Gastrocnemius medialis (tissue), 4 donors: ENCODE measurements at regions of chr15 and their contacts with region 1.

Region 1: DNA sequence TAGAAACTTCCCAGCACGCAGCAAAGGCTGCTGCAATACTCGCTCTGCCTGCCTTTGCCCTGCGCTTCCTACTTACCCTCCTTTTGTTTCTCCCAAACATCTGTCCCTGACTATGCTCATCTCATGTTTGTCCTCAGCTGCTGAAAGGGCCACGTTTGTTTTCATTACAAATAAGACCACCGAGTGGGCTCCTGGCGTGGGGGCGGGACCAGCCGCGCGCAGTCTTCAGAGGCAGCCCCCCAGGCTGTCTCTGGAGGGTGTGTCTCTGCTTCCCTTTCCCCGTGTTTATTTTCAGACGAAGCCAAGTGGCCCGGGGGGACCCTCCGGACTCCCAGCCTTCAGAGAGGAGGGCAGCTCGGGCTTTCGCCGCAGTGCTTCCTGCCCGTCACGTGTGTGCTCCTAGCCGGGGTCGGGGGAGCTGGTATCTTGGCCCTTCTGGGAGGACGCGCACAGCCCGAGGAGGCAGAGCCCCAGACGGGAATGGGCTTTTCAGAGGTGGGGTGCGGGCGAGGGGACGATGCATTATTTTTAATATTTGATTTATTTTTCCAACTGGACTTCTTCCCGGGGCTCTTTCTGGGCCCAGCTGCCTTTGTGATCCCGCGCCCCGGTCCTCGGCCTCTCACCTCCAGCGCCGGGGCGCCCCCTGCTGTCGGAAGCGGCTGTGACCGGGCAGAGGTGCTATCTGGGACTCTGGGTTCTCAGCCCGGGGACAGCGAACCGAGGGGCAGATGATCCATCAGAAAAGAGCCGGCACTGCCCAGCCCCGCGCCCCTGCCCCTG is 70.0 kb upstream of the CGNL1 start:
- DNase-seq: peak; percentile 58 to 73
- ATAC-seq: peak; percentile 73 to 92
- H3K4me3 ChIP-seq: peak overlapping the region; percentile 65 to 75 (median 72)
- H3K27ac ChIP-seq: peak overlapping the region in 1 of 4 donors; percentile 37
- H3K4me1 ChIP-seq: peaks cover 5 to 14% of the 10 kb centered on the region in 2 donors
- H3K27me3 ChIP-seq: no peaks in the 10 kb centered on the region
- CTCF ChIP-seq: peak; percentile 83 to 93 (median 90)
- POLR2A ChIP-seq: no peak

Region 2: GRCh38 chr15:56491110-56491722 is 815.1 kb before region 1 on chr15:
- in situ Hi-C with region 1: loop called (anchors 10 to 25 kb)
- intact Hi-C with region 1: loop called (anchors 2 kb)
- DNase-seq: peak; percentile 23 to 24
- ATAC-seq: no peak
- H3K4me3 ChIP-seq: no peak overlapping the region
- H3K27ac ChIP-seq: no peak overlapping the region
- H3K4me1 ChIP-seq: no peaks in the 10 kb centered on the region
- H3K27me3 ChIP-seq: no peaks in the 10 kb centered on the region
- CTCF ChIP-seq: peak in 4 of 5 experiments; percentile 27 to 75 (median 58)
- POLR2A ChIP-seq: no peak

Region 3: DNA sequence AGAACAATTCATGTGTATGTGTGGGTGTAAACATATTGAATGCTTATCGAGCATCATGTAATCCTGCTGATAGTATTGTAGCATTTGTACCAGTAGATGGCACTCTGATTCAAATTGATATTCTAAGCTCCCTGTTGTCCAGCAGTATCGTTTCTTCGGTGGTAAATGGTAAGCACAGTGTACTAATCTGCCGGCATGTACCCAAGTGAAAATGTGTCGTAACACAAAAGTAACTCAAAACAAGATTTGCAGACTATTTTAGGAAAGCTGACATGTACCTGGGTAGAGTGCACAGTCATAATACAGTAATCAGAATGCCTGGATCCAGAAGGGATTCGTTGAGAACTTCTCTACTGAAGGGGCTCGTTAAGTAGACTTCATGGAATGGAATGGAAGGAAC is 809.7 kb before region 1 on chr15:
- in situ Hi-C with region 1: loop called (anchors 10 to 25 kb)
- intact Hi-C with region 1: loop called (anchors 2 kb)
- DNase-seq: no peak
- ATAC-seq: peak; percentile 65 to 78
- H3K4me3 ChIP-seq: peak overlapping the region in 1 of 4 donors; percentile 5
- H3K27ac ChIP-seq: no peak overlapping the region
- H3K4me1 ChIP-seq: no peaks in the 10 kb centered on the region
- H3K27me3 ChIP-seq: no peaks in the 10 kb centered on the region
- CTCF ChIP-seq: peak; percentile 26 to 72 (median 57)
- POLR2A ChIP-seq: no peak

Region 4: GRCh38 chr15:56821721-56822425 is 484.5 kb before region 1 on chr15:
- in situ Hi-C with region 1: no loop called
- intact Hi-C with region 1: loop called (anchors 5 kb)
- DNase-seq: peak in 1 of 2 donors; percentile 55
- ATAC-seq: peak; percentile 65 to 84
- H3K4me3 ChIP-seq: no peak overlapping the region
- H3K27ac ChIP-seq: no peak overlapping the region
- H3K4me1 ChIP-seq: peaks cover 12 to 23% of the 10 kb centered on the region in 2 donors
- H3K27me3 ChIP-seq: no peaks in the 10 kb centered on the region
- CTCF ChIP-seq: peak; percentile 54 to 75 (median 69)
- POLR2A ChIP-seq: no peak

Region 5: GRCh38 chr15:57146506-57147201 is 159.7 kb before region 1 on chr15:
- in situ Hi-C with region 1: loop called (anchors 5 to 10 kb)
- intact Hi-C with region 1: loop called (anchors 1 kb)
- DNase-seq: no peak
- ATAC-seq: peak in 1 of 2 donors; percentile 33
- H3K4me3 ChIP-seq: peak overlapping the region in 3 of 4 donors; percentile 22 to 42 (median 31)
- H3K27ac ChIP-seq: peak overlapping the region in 1 of 4 donors; percentile 2
- H3K4me1 ChIP-seq: peaks cover 37 to 39% of the 10 kb centered on the region in 2 donors
- H3K27me3 ChIP-seq: no peaks in the 10 kb centered on the region
- CTCF ChIP-seq: peak; percentile 51 to 79 (median 62)
- POLR2A ChIP-seq: no peak

Region 6: GRCh38 chr15:57213862-57214261 is 92.5 kb before region 1 on chr15:
- in situ Hi-C with region 1: no loop called
- intact Hi-C with region 1: loop called (anchors 10 kb)
- DNase-seq: no peak
- ATAC-seq: peak; percentile 66 to 75
- H3K4me3 ChIP-seq: no peak overlapping the region
- H3K27ac ChIP-seq: peak overlapping the region in 3 of 4 donors; percentile 8 to 45 (median 14)
- H3K4me1 ChIP-seq: peaks cover 62 to 72% of the 10 kb centered on the region in 2 donors
- H3K27me3 ChIP-seq: no peaks in the 10 kb centered on the region
- CTCF ChIP-seq: peak; percentile 20 to 64 (median 34)
- POLR2A ChIP-seq: no peak